Activated CD4-positive, alpha-beta T cell treated with anti-CD3 and anti-CD28 coated beads for 36 hours (primary cell): ENCODE measurements at regions of chr3 and their contacts with region 1.

Region 1: DNA sequence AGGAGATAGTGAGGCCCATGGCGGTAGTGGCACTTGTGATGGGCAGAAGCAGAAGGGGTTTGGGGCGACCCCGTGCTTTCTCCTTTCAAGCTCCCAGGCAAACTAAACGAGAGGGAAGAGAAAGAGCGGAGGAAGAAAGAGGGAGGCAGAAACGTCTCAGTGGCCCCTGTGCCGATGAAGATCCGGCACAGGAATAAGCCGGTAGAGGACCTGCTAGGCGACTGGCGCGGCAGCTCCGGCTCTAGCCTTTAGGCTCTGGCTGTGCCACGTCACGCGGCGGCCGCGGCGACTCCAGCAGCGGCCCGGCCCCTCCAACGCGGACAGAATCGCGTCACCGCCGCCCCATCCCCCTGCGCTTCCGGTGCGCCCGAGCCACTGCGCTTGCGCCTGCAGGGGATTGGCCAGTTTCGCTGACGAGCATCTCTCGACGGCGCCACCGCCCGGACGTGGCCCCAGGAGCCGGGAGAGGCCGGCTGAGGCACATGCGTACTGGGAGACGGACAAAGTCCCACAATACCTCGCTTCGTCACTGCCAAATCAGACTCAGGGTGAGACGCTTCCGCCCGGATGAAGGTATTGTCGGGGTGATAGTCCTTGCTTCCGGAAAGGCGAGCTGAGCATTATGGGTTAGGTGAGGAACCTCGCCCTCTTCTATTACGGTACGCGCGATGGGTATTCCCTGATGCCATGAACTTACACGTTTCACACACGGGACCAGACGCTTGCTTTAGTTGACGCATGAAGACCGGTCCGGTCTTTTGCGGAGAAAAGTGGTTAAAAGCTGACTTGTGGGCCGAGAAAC is at the start of gene ARF4:
- DNase-seq: peak; percentile 99
- ATAC-seq: peak; percentile 94
- H3K4me3 Mint-ChIP-seq: peak within 1 kb of the TSS; percentile 98
- H3K27ac Mint-ChIP-seq: peak within 1 kb of the TSS; percentile 99
- H3K4me1 Mint-ChIP-seq: peaks cover 30% of the 10 kb centered on the region
- H3K27me3 Mint-ChIP-seq: no peaks in the 10 kb centered on the region
- total RNA-seq, gene ARF4: 49.6 to 50.0 TPM

Region 2: GRCh38 chr3:56682462-56683121 is 914.7 kb before region 1 on chr3:
- CTCF ChIA-PET with region 1: no interaction called
- POLR2A ChIA-PET with region 1: no interaction called
- intact Hi-C with region 1: loop called in 1 of 2 experiments (anchors 2 kb)
- DNase-seq: peak; percentile 88
- ATAC-seq: peak; percentile 78
- H3K4me3 Mint-ChIP-seq: peak overlapping the region; percentile 92
- H3K27ac Mint-ChIP-seq: peak overlapping the region; percentile 94
- H3K4me1 Mint-ChIP-seq: peaks cover 38% of the 10 kb centered on the region
- H3K27me3 Mint-ChIP-seq: no peaks in the 10 kb centered on the region

Region 3: DNA sequence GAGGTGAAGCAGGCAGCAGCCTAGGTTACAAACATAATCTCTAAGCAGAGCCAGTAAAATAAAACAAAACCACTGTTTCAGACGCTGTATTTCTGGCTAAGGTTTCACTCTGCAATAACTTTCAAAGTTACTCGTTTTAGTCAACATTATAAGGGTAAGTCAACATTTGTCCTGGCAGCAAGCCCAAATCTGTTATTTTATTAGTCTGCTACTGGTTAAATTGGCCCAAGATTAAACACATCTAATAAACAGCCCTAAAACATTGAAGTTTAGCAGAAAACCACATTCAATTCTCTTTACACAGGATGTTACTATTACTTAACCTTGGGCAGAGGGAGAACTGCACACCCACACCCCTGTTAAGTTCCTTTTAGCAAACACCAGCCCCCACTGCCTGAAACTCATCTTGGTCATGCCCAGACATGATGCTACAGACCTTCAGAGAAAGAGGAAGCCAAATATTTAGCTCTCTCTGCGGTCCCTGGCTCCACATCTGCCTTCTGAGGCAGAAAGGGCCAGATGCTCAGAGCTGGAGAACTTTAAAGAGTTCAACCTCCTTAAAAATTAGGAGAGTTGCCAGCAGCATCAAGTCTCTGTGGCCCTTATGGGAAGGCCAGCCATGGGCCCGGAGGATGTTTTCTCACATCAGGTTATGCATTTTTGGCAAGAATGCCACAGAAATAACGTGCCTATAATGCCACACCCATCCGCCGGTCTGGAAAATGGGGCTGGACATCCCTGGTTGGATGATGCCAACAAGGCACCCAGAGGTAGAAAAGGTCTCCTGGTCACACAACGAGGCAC is 813.5 kb before region 1 on chr3:
- CTCF ChIA-PET with region 1: no interaction called
- POLR2A ChIA-PET with region 1: no interaction called
- intact Hi-C with region 1: loop called in 1 of 2 experiments (anchors 10 kb)
- DNase-seq: peak; percentile 81
- ATAC-seq: peak; percentile 77
- H3K4me3 Mint-ChIP-seq: peak overlapping the region; percentile 65
- H3K27ac Mint-ChIP-seq: peak overlapping the region; percentile 97
- H3K4me1 Mint-ChIP-seq: peaks cover 98% of the 10 kb centered on the region
- H3K27me3 Mint-ChIP-seq: no peaks in the 10 kb centered on the region

Region 4: DNA sequence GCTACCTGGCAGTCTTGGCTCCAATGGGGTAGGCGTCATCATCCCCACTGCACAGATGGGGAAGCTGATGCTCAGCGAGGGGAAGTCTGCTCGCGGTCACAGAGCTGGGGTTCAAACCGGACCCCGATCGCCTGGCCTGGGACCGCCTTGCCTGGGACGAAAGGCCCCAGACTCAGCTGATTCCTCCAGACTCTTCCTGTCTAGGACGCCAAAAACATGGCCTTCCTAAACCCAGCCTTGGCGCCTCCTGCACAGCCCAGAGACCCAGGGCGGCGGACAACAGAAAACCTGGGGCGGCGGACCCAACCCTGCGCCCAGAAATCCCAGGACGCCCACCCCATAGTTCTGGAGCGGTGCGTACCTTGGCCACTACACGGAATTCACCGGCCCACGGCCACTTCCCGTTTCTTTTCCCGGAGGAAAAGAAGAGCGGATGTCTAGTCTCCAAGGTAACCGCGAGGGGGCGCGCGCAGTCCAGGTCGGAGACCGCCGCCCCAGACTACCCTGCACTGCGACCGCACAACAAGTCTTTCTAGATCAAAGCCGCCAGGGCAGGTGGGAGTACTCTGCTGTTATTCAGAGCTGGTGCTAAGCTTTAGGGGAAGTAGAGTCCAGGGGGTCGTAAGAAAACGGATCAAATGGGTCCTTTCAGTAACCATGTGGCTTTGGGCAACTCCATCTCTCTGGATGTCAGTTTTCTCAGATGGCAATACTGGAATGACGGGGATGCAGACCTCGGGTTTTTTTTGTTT is 427.3 kb before region 1 on chr3:
- CTCF ChIA-PET with region 1: interaction called, 4 read pairs
- POLR2A ChIA-PET with region 1: no interaction called
- intact Hi-C with region 1: loop called in 1 of 2 experiments (anchors 5 kb)
- DNase-seq: peak; percentile 85
- ATAC-seq: peak; percentile 86
- H3K4me3 Mint-ChIP-seq: peak overlapping the region; percentile 55
- H3K27ac Mint-ChIP-seq: no peak overlapping the region
- H3K4me1 Mint-ChIP-seq: peaks cover 4% of the 10 kb centered on the region
- H3K27me3 Mint-ChIP-seq: peaks cover 42% of the 10 kb centered on the region

Region 5: DNA sequence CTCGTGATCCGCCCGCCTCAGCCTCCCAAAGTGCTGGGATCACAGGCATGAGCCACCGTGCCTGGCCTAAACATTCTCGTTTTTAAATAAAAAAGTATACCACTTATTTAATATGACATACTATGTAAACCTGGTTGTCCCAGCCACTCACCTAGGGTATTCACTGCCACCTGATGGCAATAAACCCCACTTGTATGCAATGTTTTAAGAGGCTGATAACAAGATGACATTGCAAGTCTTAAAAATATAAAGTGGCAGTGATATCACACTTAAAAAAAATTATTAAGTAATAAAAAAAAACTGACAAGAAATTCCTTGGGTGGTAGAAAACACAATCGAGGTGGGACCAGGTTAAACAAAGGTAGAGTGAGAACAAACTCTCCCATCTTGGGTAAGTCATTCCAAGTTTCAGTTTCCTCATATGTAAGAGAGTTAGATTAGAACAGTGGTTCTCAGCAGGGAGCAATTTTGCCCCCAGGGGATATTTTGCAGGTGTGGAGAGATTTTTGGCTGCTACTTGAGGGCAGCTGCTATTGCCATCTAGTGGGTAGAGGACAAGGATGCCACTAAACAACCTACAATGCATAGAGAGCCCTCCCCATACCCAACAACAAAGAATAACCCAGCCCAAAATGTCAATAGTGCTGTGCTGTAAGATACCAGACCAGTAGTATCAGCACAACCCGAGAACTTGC is 14.7 kb before region 1 on chr3:
- CTCF ChIA-PET with region 1: interaction called, 10 read pairs
- POLR2A ChIA-PET with region 1: no interaction called
- intact Hi-C with region 1: no loop called
- DNase-seq: peak; percentile 19
- ATAC-seq: peak; percentile 42
- H3K4me3 Mint-ChIP-seq: no peak overlapping the region
- H3K27ac Mint-ChIP-seq: peak overlapping the region; percentile 7
- H3K4me1 Mint-ChIP-seq: peaks cover 19% of the 10 kb centered on the region
- H3K27me3 Mint-ChIP-seq: no peaks in the 10 kb centered on the region

Region 6: GRCh38 chr3:57755668-57756527 is 158.6 kb after region 1 on chr3 and contains the start of gene SLMAP:
- CTCF ChIA-PET with region 1: interaction called, 4 read pairs
- POLR2A ChIA-PET with region 1: interaction called, 16 read pairs
- intact Hi-C with region 1: loop called (anchors 1 kb)
- DNase-seq: peak; percentile 98
- ATAC-seq: peak; percentile 95
- H3K4me3 Mint-ChIP-seq: peak within 1 kb of the TSS; percentile 97
- H3K27ac Mint-ChIP-seq: peak within 1 kb of the TSS; percentile 97
- H3K4me1 Mint-ChIP-seq: peaks cover 43% of the 10 kb centered on the region
- H3K27me3 Mint-ChIP-seq: no peaks in the 10 kb centered on the region
- total RNA-seq, gene SLMAP: 43.1 to 55.3 TPM

Region 7: GRCh38 chr3:58414538-58415197 is 817.3 kb after region 1 on chr3:
- CTCF ChIA-PET with region 1: no interaction called
- POLR2A ChIA-PET with region 1: no interaction called
- intact Hi-C with region 1: no loop called
- DNase-seq: peak; percentile 56
- ATAC-seq: peak; percentile 85
- H3K4me3 Mint-ChIP-seq: no peak overlapping the region
- H3K27ac Mint-ChIP-seq: no peak overlapping the region
- H3K4me1 Mint-ChIP-seq: peaks cover 4% of the 10 kb centered on the region
- H3K27me3 Mint-ChIP-seq: no peaks in the 10 kb centered on the region